Activated naive CD4-positive, alpha-beta T cell treated with anti-CD3 and anti-CD28 coated beads for 36 hours (primary cell): ENCODE measurements at regions of chr7 and their contacts with region 1.

Region 1: DNA sequence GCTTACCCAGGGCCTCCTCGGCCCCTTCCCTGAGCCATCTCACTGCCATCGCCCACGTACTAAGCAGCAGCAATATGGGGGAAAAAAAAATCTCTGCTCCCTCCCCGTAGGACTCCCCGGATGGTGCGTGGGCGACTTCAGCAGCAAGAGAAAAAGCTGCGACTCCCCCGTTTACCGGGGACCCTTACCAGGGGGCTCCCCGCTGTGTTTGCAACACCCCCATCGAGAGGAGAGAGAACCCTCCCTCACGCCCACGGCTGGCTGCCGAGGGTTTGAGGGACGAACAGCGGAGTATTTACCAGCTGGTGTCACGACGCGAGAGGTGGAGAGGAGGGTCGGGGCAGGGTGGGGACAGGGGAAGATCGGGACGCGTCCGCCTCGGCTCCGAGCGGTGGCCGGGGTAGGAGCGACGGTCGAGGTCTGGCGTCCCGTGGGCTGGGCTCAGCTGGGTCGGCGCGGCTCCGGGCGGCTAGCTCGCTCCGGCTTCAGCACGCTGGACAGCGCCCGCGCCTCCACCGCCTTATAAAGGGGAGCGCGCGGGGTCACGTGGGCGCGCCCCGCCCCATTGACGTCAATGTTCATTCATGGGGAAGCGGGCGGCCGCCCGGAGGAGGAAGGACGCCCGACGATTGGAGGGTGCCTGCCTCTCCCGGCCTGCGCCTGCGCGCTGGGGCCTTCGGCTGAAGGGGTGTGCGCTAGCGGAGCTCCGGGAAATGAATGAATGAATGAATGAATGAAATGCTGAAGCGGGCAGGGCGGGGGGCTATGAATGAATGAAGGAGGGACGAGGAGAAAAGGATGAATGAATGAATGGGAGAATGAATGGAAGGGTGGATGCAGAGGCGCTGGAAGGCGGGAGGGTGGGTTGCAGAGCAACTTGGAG is at the start of gene VGF:
- DNase-seq: peak; percentile 95
- H3K4me3 Mint-ChIP-seq: peak within 1 kb of the TSS; percentile 77
- H3K27ac Mint-ChIP-seq: no peak within 1 kb of the TSS
- H3K4me1 Mint-ChIP-seq: peaks cover 58% of the 10 kb centered on the region
- H3K27me3 Mint-ChIP-seq: peaks cover 58% of the 10 kb centered on the region
- total RNA-seq, gene VGF: not detected

Region 2: DNA sequence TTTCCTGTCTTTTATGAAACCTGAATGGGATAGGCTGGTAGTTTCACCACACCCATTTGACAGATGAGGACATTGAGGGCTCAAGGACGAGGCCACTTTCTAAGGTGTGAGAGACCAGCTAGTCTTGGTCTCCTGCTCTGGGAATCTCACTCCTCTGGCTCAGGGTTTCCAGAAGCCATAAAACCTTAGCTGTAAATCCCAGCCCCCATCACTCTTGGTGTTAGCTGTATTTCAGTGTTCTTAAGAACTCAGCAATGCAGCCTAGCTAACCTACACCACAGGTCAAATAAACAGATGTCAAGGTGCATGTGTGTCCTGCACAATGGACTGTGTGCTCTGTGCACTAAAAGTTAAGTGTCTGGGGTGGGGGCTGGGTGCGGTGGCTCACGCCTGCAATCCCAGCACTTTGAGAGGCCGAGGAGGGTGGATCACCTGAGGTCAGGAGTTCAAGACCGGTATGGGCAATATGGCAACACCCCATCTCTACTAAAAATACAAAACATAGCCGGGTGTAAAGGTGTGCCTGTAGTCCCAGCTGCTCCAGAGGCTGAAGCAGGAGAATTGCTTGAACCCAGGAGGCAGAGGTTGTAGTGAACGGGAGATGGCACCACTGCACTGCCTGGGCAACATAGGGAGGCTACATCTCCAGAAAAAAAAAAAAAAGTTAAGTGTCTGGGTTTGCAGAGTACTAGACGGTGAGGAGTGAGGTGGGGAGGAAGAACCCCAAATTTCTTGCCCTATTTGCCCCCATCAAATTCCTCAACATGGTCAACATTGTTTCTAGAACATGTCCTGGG is 445.6 kb before region 1 on chr7:
- CTCF ChIA-PET with region 1: no interaction called
- intact Hi-C with region 1: no loop called
- DNase-seq: no peak
- H3K4me3 Mint-ChIP-seq: no peak overlapping the region
- H3K27ac Mint-ChIP-seq: no peak overlapping the region
- H3K4me1 Mint-ChIP-seq: no peaks in the 10 kb centered on the region
- H3K27me3 Mint-ChIP-seq: peaks cover 37% of the 10 kb centered on the region

Region 3: DNA sequence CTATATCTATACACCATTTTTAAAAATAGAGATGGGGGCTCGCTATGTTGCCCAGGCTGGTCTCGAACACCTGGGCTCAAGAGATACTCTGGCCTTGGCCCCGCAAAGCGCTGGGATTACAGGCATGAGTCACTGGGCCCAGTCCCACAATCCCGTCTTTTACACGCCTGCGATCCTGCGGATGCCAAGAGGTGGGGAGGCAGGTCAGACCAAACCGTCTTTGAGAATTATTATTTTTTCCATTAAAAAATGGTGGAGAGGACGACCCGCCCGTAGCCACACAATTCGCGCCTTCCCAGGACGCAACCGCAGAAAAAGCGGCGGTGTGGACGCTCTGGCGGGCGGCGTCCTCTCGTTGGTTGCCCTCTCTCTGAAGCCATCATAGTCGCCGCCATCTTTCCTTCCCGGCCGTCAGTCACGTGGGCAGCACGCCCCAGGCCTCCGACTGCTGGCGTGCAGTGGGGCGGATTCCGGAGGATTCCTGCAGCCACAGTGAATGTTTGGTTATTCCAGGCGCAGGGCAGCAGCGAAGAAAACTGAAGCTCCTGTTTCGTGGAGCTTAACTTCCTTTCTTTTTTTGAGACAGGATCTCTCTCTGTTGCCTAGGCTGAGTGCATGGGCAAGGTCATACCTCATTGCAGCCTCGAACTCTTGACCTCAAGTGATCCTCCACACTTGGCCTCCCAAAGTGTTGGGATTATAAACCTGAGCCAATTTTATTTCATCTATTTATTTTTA is 328.0 kb before region 1 on chr7:
- CTCF ChIA-PET with region 1: no interaction called
- intact Hi-C with region 1: no loop called
- DNase-seq: peak; percentile 80
- H3K4me3 Mint-ChIP-seq: peak overlapping the region; percentile 68
- H3K27ac Mint-ChIP-seq: peak overlapping the region; percentile 72
- H3K4me1 Mint-ChIP-seq: peaks cover 7% of the 10 kb centered on the region
- H3K27me3 Mint-ChIP-seq: no peaks in the 10 kb centered on the region

Region 4: DNA sequence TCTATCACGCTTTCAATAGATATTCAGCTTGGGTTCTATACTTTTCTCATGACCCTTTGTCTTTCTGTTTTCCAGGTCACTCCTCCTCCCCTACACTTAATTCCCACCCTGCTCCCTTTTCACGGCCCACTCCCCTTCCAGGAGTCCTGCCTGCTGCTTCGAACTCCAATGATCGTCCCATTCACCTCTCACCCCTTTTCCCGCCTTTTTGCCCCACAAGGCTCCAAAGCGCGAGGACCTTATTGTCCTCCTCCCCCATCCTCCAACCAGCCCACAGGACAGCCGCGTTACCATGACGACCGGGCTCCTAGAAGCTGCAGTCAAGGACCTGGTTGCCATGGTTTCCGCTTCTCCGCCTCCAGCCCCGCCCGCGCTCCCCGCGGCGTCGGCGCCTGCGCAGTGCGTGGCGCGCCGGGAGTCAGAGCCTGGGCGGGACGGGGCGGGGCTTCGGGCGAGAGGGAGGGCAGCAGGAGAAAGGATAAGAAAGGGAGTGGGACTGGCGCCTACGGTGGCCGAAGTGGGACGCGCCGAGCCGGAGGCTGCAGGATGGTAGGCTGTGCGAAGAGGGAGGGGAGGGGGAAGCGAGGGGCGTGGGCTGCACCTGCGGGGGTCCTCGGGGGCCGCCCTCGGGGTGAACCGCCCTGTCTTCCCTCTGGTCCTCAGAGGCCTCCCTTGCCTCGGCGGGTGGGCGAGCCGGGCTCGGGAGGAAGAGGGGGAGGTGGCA is 11.2 kb before region 1 on chr7 and contains the start of gene AP1S1:
- CTCF ChIA-PET with region 1: interaction called, 5 read pairs
- intact Hi-C with region 1: loop called (anchors 1 kb)
- DNase-seq: peak; percentile 96
- H3K4me3 Mint-ChIP-seq: peak within 1 kb of the TSS; percentile 79
- H3K27ac Mint-ChIP-seq: no peak within 1 kb of the TSS
- H3K4me1 Mint-ChIP-seq: peaks cover 9% of the 10 kb centered on the region
- H3K27me3 Mint-ChIP-seq: no peaks in the 10 kb centered on the region
- total RNA-seq, gene AP1S1: 40.6 to 43.5 TPM

Region 5: GRCh38 chr7:101287032-101287431 is 121.7 kb after region 1 on chr7:
- CTCF ChIA-PET with region 1: no interaction called
- intact Hi-C with region 1: loop called (anchors 10 kb)
- DNase-seq: no peak
- H3K4me3 Mint-ChIP-seq: no peak overlapping the region
- H3K27ac Mint-ChIP-seq: no peak overlapping the region
- H3K4me1 Mint-ChIP-seq: peaks cover 6% of the 10 kb centered on the region
- H3K27me3 Mint-ChIP-seq: peaks cover 5% of the 10 kb centered on the region

Region 6: GRCh38 chr7:101321491-101322401 is 156.4 kb after region 1 on chr7 and contains the start of gene IFT22:
- CTCF ChIA-PET with region 1: interaction called, 3 read pairs
- intact Hi-C with region 1: loop called (anchors 1 kb)
- DNase-seq: peak; percentile 92
- H3K4me3 Mint-ChIP-seq: peak within 1 kb of the TSS; percentile 86
- H3K27ac Mint-ChIP-seq: peak within 1 kb of the TSS; percentile 76
- H3K4me1 Mint-ChIP-seq: peaks cover 6% of the 10 kb centered on the region
- H3K27me3 Mint-ChIP-seq: no peaks in the 10 kb centered on the region
- total RNA-seq, gene IFT22: 5.4 to 6.8 TPM